K562 (cell line): ENCODE measurements at regions of chr4 and their contacts with region 1.

Region 1: DNA sequence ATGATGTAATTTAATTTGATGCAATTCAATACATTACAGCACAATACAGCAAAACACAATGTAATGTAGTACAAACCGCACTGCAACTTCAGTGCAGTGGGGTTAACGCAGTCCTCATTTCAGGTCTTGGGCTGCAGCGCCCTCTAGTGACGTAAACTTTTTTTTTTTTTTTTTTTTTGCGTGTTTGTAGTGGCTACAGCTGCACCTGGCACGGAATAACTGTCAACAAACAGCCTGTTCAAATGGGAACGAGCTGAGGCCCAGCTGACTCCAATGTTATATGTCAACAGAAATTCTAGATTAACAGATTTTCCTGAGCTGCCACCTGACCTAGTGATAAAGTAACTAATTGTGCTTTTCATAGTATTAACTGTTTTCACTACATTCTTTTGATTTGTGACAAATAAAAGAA is 33.5 kb upstream of the RASSF6 start:
- DNase-seq: peak; percentile 44 to 71 (median 62)
- ATAC-seq: peak; percentile 73
- H3K4me3 ChIP-seq: no peak overlapping the region
- H3K27ac ChIP-seq: no peak overlapping the region
- H3K4me1 ChIP-seq: no peaks in the 10 kb centered on the region
- H3K27me3 ChIP-seq: no peaks in the 10 kb centered on the region; a peak in 1 of 5 replicates
- CTCF ChIP-seq: peak; percentile 43 to 80 (median 68); a peak in 5 of 6 replicates
- EP300 ChIP-seq: no peak
- POLR2A ChIP-seq: no peak
- RAD21 ChIP-seq: peak; percentile 53 to 66

Region 2: DNA sequence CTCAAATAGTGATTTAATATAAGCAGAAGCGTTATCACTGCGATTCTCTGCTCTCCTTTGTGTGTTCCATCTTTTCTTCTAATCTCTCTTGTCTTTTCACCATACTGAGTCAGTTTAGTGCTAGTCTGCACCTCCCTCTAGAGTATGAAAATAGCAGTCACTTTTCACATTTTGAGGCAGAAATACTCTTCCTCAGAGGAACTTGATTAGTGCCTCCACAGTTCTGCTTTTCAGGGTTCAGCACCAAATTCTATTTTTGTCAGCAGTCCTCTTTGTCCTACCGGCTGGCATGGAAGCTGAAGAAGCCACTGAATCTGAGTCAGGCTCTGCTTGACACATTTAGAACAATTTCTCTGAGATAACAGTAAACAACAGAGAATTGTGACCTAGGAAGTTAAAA is 345.4 kb before region 1 on chr4:
- CTCF ChIA-PET with region 1: interaction called, 10 read pairs
- POLR2A ChIA-PET with region 1: no interaction called
- in situ Hi-C with region 1: loop called (anchors 10 kb)
- intact Hi-C with region 1: loop called (anchors 5 kb)
- DNase-seq: peak in 1 of 4 experiments; percentile 35
- ATAC-seq: peak; percentile 78
- H3K4me3 ChIP-seq: no peak overlapping the region
- H3K27ac ChIP-seq: no peak overlapping the region
- H3K4me1 ChIP-seq: no peaks in the 10 kb centered on the region
- H3K27me3 ChIP-seq: no peaks in the 10 kb centered on the region
- CTCF ChIP-seq: peak; percentile 44 to 56 (median 49); a peak in 5 of 6 replicates
- EP300 ChIP-seq: no peak
- POLR2A ChIP-seq: no peak
- RAD21 ChIP-seq: peak; percentile 31 to 63; a peak in 3 of 4 replicates

Region 3: GRCh38 chr4:73341454-73341853 is 312.2 kb before region 1 on chr4:
- CTCF ChIA-PET with region 1: interaction called, 19 read pairs
- POLR2A ChIA-PET with region 1: no interaction called
- in situ Hi-C with region 1: loop called (anchors 5 kb)
- intact Hi-C with region 1: loop called (anchors 1 kb)
- DNase-seq: peak; percentile 12 to 67 (median 20)
- ATAC-seq: peak; percentile 93
- H3K4me3 ChIP-seq: no peak overlapping the region
- H3K27ac ChIP-seq: no peak overlapping the region
- H3K4me1 ChIP-seq: peaks cover 0 to 2% of the 10 kb centered on the region in 2 experiments; a peak in 1 of 5 replicates
- H3K27me3 ChIP-seq: no peaks in the 10 kb centered on the region
- CTCF ChIP-seq: peak; percentile 65 to 84 (median 83)
- EP300 ChIP-seq: no peak
- POLR2A ChIP-seq: no peak
- RAD21 ChIP-seq: peak; percentile 88 to 91

Region 4: GRCh38 chr4:73387552-73387951 is 266.1 kb before region 1 on chr4:
- CTCF ChIA-PET with region 1: no interaction called
- POLR2A ChIA-PET with region 1: no interaction called
- in situ Hi-C with region 1: no loop called
- intact Hi-C with region 1: no loop called
- DNase-seq: no peak
- ATAC-seq: no peak
- H3K4me3 ChIP-seq: no peak overlapping the region
- H3K27ac ChIP-seq: no peak overlapping the region
- H3K4me1 ChIP-seq: no peaks in the 10 kb centered on the region
- H3K27me3 ChIP-seq: no peaks in the 10 kb centered on the region
- CTCF ChIP-seq: no peak
- EP300 ChIP-seq: no peak
- POLR2A ChIP-seq: no peak
- RAD21 ChIP-seq: no peak

Region 5: DNA sequence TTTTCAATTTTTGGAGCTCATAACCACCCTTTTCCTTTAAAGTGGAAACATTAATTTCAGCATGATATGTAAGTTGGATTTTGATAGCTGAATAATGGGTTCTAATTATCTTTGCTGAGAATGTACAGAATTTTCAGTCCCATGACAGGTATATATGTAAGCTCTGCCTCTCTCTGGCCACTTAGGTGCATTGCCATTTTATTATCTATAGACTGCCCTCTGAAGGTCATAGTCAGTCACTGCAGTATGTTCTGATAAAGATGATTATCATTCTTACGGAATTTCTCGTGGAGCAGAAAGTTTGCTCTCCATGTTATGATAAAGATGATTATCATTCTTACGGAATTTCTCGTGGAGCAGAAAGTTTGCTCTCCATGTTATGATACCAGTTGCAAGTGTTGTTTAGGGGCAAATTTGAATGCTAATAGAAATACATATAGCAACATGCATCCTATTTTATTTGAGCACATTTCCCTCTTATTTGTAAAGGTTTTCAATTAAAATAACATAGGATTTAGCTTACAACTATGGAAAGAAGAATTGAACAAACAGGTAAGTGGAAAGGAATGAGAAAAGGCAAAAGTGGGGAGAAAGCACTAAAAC is 207.3 kb before region 1 on chr4:
- CTCF ChIA-PET with region 1: interaction called, 3 read pairs
- POLR2A ChIA-PET with region 1: no interaction called
- in situ Hi-C with region 1: no loop called
- intact Hi-C with region 1: loop called (anchors 10 kb)
- DNase-seq: peak; percentile 41 to 67 (median 50)
- ATAC-seq: peak; percentile 90
- H3K4me3 ChIP-seq: no peak overlapping the region
- H3K27ac ChIP-seq: no peak overlapping the region
- H3K4me1 ChIP-seq: peaks cover 5 to 11% of the 10 kb centered on the region in 2 experiments; a peak in 3 of 5 replicates
- H3K27me3 ChIP-seq: no peaks in the 10 kb centered on the region
- CTCF ChIP-seq: peak; percentile 82 to 99 (median 98)
- EP300 ChIP-seq: no peak
- POLR2A ChIP-seq: no peak
- RAD21 ChIP-seq: peak; percentile 72 to 88

Region 6: DNA sequence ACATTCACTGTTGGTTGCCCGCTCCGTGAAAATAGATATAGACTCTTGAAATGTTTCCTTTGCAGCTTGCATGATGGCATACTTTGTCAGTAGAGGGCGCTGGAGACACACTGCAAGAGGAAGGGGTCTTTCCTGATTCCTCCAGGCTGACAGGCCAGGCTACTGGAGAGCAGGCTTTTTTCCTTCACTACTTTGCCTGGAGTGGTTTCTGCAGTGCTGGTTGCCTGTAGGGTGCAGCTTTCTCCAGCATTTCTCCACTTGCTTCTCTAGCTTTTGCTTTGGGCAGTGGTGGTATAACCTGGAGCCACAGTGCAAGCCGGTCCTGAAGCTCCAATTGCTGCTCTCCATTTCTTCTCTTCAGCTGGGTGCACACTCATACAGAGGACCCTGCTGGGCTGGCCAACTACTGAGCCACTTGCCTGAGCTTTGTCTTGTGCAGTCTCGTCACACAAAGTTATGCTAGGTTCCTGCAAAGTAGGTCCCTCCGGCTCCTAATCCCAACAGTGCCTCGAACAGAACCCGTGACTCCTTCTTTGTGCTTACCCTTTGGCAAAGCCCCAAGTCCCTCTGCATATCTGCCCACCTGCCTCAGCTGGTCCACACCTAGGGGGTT is 79.8 kb before region 1 on chr4:
- CTCF ChIA-PET with region 1: interaction called, 12 read pairs
- POLR2A ChIA-PET with region 1: no interaction called
- in situ Hi-C with region 1: no loop called
- intact Hi-C with region 1: loop called (anchors 2 kb)
- DNase-seq: peak; percentile 16 to 84 (median 33)
- ATAC-seq: peak; percentile 92
- H3K4me3 ChIP-seq: no peak overlapping the region
- H3K27ac ChIP-seq: no peak overlapping the region
- H3K4me1 ChIP-seq: no peaks in the 10 kb centered on the region
- H3K27me3 ChIP-seq: no peaks in the 10 kb centered on the region
- CTCF ChIP-seq: peak; percentile 87 to 88 (median 87)
- EP300 ChIP-seq: no peak
- POLR2A ChIP-seq: no peak
- RAD21 ChIP-seq: peak; percentile 73 to 85

Region 7: GRCh38 chr4:73593631-73594241 is 60.0 kb before region 1 on chr4:
- CTCF ChIA-PET with region 1: interaction called, 14 read pairs
- POLR2A ChIA-PET with region 1: no interaction called
- in situ Hi-C with region 1: no loop called
- intact Hi-C with region 1: loop called (anchors 5 kb)
- DNase-seq: peak in 1 of 4 experiments; percentile 35
- ATAC-seq: no peak
- H3K4me3 ChIP-seq: no peak overlapping the region
- H3K27ac ChIP-seq: no peak overlapping the region
- H3K4me1 ChIP-seq: peaks cover 0 to 5% of the 10 kb centered on the region in 2 experiments; a peak in 2 of 5 replicates
- H3K27me3 ChIP-seq: no peaks in the 10 kb centered on the region
- CTCF ChIP-seq: peak in 2 of 3 experiments; percentile 37 to 57; a peak in 3 of 6 replicates
- EP300 ChIP-seq: no peak
- POLR2A ChIP-seq: no peak
- RAD21 ChIP-seq: peak in 1 of 2 experiments; percentile 56; a peak in 2 of 4 replicates